Caco-2 (cell line): ENCODE measurements at regions of chr12 and their contacts with region 1.

Region 1: GRCh38 chr12:52980693-52981423 is 25.4 kb upstream of the EIF4B start:
- DNase-seq: peak; percentile 95 to 96
- H3K4me3 ChIP-seq: no peak overlapping the region
- H3K4me3 Mint-ChIP-seq: peak overlapping the region; percentile 61
- H3K27ac Mint-ChIP-seq: peak overlapping the region; percentile 85
- H3K4me1 ChIP-seq: peaks cover 33% of the 10 kb centered on the region
- H3K4me1 Mint-ChIP-seq: peaks cover 55% of the 10 kb centered on the region
- H3K27me3 ChIP-seq: no peaks in the 10 kb centered on the region
- H3K27me3 Mint-ChIP-seq: no peaks in the 10 kb centered on the region
- CTCF ChIP-seq: peak; percentile 98

Region 2: DNA sequence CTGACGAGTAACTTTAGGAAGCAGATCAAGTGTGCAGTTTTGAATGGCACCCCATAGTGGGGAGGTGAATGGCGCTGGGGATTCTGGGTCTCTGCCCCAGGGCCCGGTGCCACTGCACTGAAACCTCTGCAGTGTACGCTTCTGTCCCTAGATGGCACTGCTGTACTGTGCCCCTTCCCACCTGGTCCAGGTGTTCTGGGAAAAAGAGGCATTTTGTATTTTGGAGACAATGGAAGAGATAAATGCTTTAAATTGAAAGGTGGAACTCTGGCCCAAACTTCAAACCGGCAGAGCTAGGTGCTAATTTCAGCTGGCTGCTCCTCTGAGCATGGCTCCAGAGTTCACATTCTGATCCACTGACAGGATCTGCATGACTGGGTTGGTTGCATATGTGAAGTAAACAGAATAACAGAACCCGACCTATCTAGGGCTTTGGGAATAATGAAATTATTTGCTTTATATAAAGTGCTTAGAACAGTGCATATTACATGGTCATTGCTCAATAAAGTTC is 841.3 kb before region 1 on chr12:
- CTCF ChIA-PET with region 1: no interaction called
- POLR2A ChIA-PET with region 1: no interaction called
- intact Hi-C with region 1: loop called (anchors 5 kb)
- DNase-seq: peak; percentile 57 to 78
- H3K4me3 ChIP-seq: no peak overlapping the region
- H3K4me3 Mint-ChIP-seq: no peak overlapping the region
- H3K27ac Mint-ChIP-seq: no peak overlapping the region
- H3K4me1 ChIP-seq: peaks cover 14% of the 10 kb centered on the region
- H3K4me1 Mint-ChIP-seq: peaks cover 14% of the 10 kb centered on the region
- H3K27me3 ChIP-seq: no peaks in the 10 kb centered on the region
- H3K27me3 Mint-ChIP-seq: no peaks in the 10 kb centered on the region
- CTCF ChIP-seq: peak; percentile 88 to 92

Region 3: GRCh38 chr12:52787324-52788191 is 193.3 kb before region 1 on chr12:
- CTCF ChIA-PET with region 1: no interaction called
- POLR2A ChIA-PET with region 1: no interaction called
- intact Hi-C with region 1: no loop called
- DNase-seq: no peak
- H3K4me3 ChIP-seq: no peak overlapping the region
- H3K4me3 Mint-ChIP-seq: no peak overlapping the region
- H3K27ac Mint-ChIP-seq: no peak overlapping the region
- H3K4me1 ChIP-seq: no peaks in the 10 kb centered on the region
- H3K4me1 Mint-ChIP-seq: no peaks in the 10 kb centered on the region
- H3K27me3 ChIP-seq: no peaks in the 10 kb centered on the region
- H3K27me3 Mint-ChIP-seq: peaks cover 10% of the 10 kb centered on the region
- CTCF ChIP-seq: no peak

Region 4: DNA sequence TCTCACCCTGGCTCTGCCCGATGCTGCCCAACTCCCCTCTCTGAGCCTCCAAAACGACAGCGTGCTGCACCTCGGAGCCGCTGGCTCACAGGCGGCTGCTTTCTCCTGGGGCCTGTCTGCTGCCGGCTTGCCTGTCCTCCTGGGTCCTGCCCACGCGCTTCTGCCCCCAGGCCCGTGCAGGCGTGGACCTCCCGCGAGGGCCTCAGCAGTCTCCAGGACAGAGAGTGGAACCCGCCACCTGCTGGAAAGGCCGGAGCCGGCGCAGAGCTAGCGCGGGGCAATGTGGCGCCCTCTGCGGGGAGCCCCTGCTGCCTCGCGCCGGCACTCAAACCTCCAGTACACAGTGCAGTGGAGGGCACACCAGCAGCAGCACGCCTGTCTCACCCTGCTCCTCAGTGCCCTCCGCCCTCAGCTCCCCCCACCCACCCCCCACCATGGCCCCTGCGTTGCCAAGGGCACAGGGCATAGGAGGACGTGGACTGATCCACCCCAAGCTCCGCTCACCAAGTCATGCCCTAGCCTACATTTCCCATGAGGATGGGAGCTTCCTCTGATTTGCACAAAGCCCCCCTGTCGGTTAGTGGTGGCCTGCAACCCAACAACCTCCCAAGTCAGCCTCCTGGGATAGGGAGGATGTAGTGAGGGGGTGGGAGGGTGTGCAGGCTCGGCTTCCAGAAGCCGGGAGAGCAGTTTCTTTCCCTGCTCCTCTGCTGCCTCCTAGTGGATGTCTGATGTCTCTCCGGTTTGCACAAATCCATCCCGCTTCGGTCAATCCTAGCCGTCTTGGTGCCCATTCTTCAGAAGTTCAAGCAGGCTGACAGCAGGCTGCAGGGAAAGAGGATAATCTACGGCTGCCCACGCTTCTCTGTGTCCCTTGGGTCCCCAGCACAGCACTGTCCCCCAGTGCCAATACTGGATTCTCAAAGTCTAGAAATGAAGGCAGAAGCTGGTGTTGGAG is 101.2 kb before region 1 on chr12:
- CTCF ChIA-PET with region 1: interaction called, 140 read pairs
- POLR2A ChIA-PET with region 1: interaction called, 15 read pairs
- intact Hi-C with region 1: loop called (anchors 1 kb)
- DNase-seq: peak; percentile 88 to 90
- H3K4me3 ChIP-seq: no peak overlapping the region
- H3K4me3 Mint-ChIP-seq: peak overlapping the region; percentile 45
- H3K27ac Mint-ChIP-seq: no peak overlapping the region
- H3K4me1 ChIP-seq: peaks cover 27% of the 10 kb centered on the region
- H3K4me1 Mint-ChIP-seq: peaks cover 10% of the 10 kb centered on the region
- H3K27me3 ChIP-seq: no peaks in the 10 kb centered on the region
- H3K27me3 Mint-ChIP-seq: no peaks in the 10 kb centered on the region
- CTCF ChIP-seq: peak; percentile 76 to 88

Region 5: GRCh38 chr12:52895061-52895887 is 85.6 kb before region 1 on chr12:
- CTCF ChIA-PET with region 1: interaction called, 19 read pairs
- POLR2A ChIA-PET with region 1: interaction called, 5 read pairs
- intact Hi-C with region 1: no loop called
- DNase-seq: peak; percentile 88 to 93
- H3K4me3 ChIP-seq: no peak overlapping the region
- H3K4me3 Mint-ChIP-seq: peak overlapping the region; percentile 45
- H3K27ac Mint-ChIP-seq: peak overlapping the region; percentile 83
- H3K4me1 ChIP-seq: peaks cover 53% of the 10 kb centered on the region
- H3K4me1 Mint-ChIP-seq: peaks cover 39% of the 10 kb centered on the region
- H3K27me3 ChIP-seq: no peaks in the 10 kb centered on the region
- H3K27me3 Mint-ChIP-seq: peaks cover 2% of the 10 kb centered on the region
- CTCF ChIP-seq: no peak

Region 6: GRCh38 chr12:52924764-52925716 is 55.8 kb before region 1 on chr12:
- CTCF ChIA-PET with region 1: interaction called, 11 read pairs
- POLR2A ChIA-PET with region 1: interaction called, 13 read pairs
- intact Hi-C with region 1: loop called (anchors 1 kb)
- DNase-seq: peak; percentile 92 to 96
- H3K4me3 ChIP-seq: peak overlapping the region; percentile 13
- H3K4me3 Mint-ChIP-seq: peak overlapping the region; percentile 64
- H3K27ac Mint-ChIP-seq: peak overlapping the region; percentile 98
- H3K4me1 ChIP-seq: peaks cover 80% of the 10 kb centered on the region
- H3K4me1 Mint-ChIP-seq: peaks cover 56% of the 10 kb centered on the region
- H3K27me3 ChIP-seq: no peaks in the 10 kb centered on the region
- H3K27me3 Mint-ChIP-seq: no peaks in the 10 kb centered on the region
- CTCF ChIP-seq: no peak

Region 7: GRCh38 chr12:52956987-52957386 is 23.9 kb before region 1 on chr12:
- CTCF ChIA-PET with region 1: interaction called, 3 read pairs
- POLR2A ChIA-PET with region 1: interaction called, 3 read pairs
- intact Hi-C with region 1: loop called (anchors 2 kb)
- DNase-seq: no peak
- H3K4me3 ChIP-seq: no peak overlapping the region
- H3K4me3 Mint-ChIP-seq: no peak overlapping the region
- H3K27ac Mint-ChIP-seq: no peak overlapping the region
- H3K4me1 ChIP-seq: peaks cover 18% of the 10 kb centered on the region
- H3K4me1 Mint-ChIP-seq: peaks cover 27% of the 10 kb centered on the region
- H3K27me3 ChIP-seq: no peaks in the 10 kb centered on the region
- H3K27me3 Mint-ChIP-seq: no peaks in the 10 kb centered on the region
- CTCF ChIP-seq: no peak

Region 8: DNA sequence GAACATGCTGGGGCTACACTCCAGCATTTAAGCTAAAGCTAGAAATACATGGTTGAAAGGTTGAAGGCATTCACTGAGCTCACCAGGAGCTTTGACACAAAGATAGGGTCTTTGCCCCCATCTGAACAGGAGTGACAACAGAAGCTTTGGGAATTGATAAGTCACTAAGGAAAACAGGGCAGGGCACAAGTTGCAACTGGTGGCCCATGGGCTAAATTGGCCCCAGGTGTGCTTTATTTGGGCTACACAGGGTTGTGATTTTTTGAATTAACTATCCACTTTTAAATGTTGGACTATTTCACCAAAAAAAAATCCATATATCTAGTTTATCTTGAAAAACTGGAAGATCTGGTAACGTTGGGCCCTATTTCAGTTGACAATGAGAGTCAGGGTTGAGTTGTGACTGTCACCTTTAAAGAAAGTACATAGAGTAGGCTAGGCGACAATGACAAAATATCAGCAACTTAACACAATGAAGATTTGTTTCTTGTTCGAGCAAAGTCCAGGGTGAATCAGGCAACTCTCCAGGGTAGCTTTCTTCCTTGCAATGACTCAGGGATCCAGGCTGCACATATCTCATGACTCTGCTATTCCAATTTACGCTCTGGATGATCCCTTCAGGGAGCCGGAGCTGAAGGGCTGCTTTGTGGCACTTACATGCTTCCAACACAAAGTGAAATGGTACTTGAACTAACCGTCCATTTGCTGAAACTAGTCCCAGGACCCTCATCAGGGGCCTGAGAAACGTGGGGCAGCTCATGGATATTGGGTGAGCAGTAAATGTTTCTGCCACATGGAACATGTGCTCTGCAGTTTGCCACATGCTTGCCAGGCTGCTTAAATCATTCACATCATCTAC is 12.1 kb after region 1 on chr12:
- CTCF ChIA-PET with region 1: interaction called, 17 read pairs
- POLR2A ChIA-PET with region 1: no interaction called
- intact Hi-C with region 1: no loop called
- DNase-seq: peak; percentile 78 to 81
- H3K4me3 ChIP-seq: no peak overlapping the region
- H3K4me3 Mint-ChIP-seq: peak overlapping the region; percentile 55
- H3K27ac Mint-ChIP-seq: peak overlapping the region; percentile 58
- H3K4me1 ChIP-seq: peaks cover 43% of the 10 kb centered on the region
- H3K4me1 Mint-ChIP-seq: peaks cover 33% of the 10 kb centered on the region
- H3K27me3 ChIP-seq: no peaks in the 10 kb centered on the region
- H3K27me3 Mint-ChIP-seq: no peaks in the 10 kb centered on the region
- CTCF ChIP-seq: no peak